Mammary epithelial cell (primary cell): ENCODE measurements at regions of chr1 and their contacts with region 1.

Region 1: DNA sequence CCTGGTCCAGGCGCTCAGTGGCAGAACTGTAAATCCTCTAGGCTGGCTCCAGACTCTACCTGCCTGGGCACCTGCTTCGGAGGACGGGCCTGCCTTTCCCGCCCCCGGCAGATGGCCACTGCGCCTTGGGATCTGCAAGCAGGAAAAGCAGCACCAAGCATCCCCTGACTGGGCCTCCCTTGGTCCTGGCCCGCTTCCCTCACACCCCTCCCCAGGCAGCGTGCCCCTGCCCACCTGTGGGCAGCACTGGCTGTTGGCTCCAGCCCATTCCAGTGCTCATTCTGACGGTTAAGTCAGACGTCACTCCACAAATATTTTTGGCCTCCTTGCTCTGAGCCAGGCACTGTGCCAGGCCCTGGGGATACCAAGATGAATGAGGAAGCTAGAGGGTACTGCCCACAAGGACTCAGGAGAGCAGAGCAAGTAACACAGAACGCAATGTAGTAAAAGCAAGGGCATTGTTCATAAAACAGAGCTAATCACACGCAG is 22.0 kb upstream of the BLACAT1 start:
- DNase-seq: peak; percentile 97
- H3K4me3 ChIP-seq: no peak overlapping the region
- H3K27ac ChIP-seq: peak overlapping the region; percentile 31
- H3K4me1 ChIP-seq: peaks cover 35% of the 10 kb centered on the region
- H3K27me3 ChIP-seq: no peaks in the 10 kb centered on the region
- CTCF ChIP-seq: no peak

Region 2: GRCh38 chr1:205321164-205321958 is 156.4 kb before region 1 on chr1 and contains the start of gene NUAK2:
- CTCF ChIA-PET with region 1: no interaction called
- dilution Hi-C with region 1: no loop called
- in situ Hi-C with region 1: no loop called
- intact Hi-C with region 1: no loop called
- DNase-seq: peak; percentile 88
- H3K4me3 ChIP-seq: peak within 1 kb of the TSS; percentile 58 to 92 (median 87)
- H3K27ac ChIP-seq: peak within 1 kb of the TSS; percentile 24
- H3K4me1 ChIP-seq: peaks cover 48% of the 10 kb centered on the region
- H3K27me3 ChIP-seq: no peaks in the 10 kb centered on the region
- CTCF ChIP-seq: peak in 1 of 2 donors; percentile 42
- total RNA-seq, gene NUAK2: 11.8 TPM

Region 3: DNA sequence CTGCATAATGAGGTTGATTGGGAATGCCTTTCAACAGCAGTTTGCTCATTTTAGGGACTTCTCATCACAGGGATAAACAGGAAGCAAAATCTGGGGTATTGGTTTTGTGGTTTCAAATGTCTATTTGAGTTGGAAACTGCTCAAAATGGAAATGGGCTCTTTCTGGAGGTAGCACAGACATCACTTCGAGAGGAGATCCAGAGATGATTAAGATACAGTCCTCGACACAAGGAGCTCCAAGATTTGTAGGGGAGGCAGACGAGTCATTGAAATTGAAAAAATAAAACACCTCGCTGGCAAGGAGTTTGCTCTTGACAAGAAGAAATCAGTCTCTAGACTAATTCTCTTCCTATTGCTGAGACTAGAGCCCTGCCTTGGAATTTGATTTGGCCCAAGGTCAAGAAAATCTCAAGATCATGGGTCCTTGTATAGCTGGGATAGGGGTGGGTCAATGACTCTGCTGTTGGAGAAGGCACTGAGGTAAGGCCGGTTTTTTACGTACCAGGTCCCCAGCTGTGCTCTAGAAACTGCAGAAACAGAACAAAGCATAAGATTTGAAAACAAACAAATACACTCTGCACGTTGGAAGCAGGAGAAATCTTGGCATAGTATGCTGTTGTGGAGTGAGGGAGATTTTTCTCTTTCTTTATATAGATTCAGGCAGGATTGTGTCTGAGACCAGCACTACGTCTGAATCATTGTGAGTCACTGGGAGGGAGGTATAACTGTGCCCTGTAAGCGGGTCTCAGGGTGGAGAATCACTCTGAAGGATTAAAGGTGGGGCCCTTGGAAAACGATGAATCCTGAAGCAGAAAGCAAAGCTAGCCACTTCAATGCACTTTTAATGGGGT is 103.3 kb before region 1 on chr1:
- CTCF ChIA-PET with region 1: no interaction called
- dilution Hi-C with region 1: loop called (anchors 5 kb)
- in situ Hi-C with region 1: no loop called
- intact Hi-C with region 1: no loop called
- DNase-seq: peak; percentile 82
- H3K4me3 ChIP-seq: no peak overlapping the region
- H3K27ac ChIP-seq: peak overlapping the region; percentile 4
- H3K4me1 ChIP-seq: peaks cover 32% of the 10 kb centered on the region
- H3K27me3 ChIP-seq: no peaks in the 10 kb centered on the region
- CTCF ChIP-seq: no peak

Region 4: GRCh38 chr1:205449750-205450443 is 27.9 kb before region 1 on chr1:
- CTCF ChIA-PET with region 1: no interaction called
- dilution Hi-C with region 1: no loop called
- in situ Hi-C with region 1: no loop called
- intact Hi-C with region 1: loop called (anchors 1 kb)
- DNase-seq: peak; percentile 98
- H3K4me3 ChIP-seq: peak overlapping the region; percentile 76 to 97 (median 77)
- H3K27ac ChIP-seq: peak overlapping the region; percentile 91
- H3K4me1 ChIP-seq: peaks cover 52% of the 10 kb centered on the region
- H3K27me3 ChIP-seq: peaks cover under 1% of the 10 kb centered on the region
- CTCF ChIP-seq: peak in 1 of 2 donors; percentile 27